Activated naive CD8-positive, alpha-beta T cell treated with anti-CD3 and anti-CD28 coated beads, Interleukin-2, amount 10 ng/mL, durations not matched to agents 7 days and 5 days (primary cell): ENCODE measurements at regions of chr22 and their contacts with region 1.

Region 1: DNA sequence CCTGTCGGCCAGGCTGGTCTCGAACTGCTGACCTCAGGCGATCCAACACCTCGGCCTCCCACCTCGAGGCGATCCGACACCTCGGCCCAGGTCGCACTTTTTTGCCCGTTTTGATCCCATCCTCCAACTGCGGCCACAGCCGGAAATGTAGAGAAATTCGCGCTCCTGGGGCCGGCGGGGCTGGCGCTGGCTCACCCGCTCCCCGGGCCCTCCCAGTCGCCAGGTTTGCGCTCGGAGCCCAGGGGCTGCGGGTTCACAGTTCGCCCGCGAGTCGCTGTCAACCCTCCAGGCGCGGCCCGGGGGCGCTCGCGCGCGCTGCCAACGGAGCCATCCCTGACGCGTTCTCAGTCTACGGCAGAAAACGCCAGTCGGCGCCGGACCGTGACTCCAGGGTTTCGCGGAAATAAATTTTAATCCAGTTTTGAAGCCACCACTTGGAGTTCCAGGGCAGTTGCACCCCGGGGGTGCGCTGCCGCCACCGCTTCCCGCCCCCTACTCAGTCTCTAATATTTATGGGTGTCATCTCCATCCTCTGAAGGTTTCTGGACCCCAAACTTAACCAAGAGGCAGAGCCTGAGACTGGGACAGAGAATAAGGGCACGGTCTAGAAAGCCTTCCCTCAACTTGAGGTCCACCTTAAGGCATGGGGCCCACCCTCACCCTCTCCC is 1.5 kb upstream of the KLHDC7B start:
- DNase-seq: peak; percentile 92
- ATAC-seq: peak; percentile 65
- H3K4me3 Mint-ChIP-seq: peak overlapping the region; percentile 77
- H3K27ac Mint-ChIP-seq: peak overlapping the region; percentile 98
- H3K4me1 Mint-ChIP-seq: peaks cover 51% of the 10 kb centered on the region
- H3K27me3 Mint-ChIP-seq: no peaks in the 10 kb centered on the region

Region 2: DNA sequence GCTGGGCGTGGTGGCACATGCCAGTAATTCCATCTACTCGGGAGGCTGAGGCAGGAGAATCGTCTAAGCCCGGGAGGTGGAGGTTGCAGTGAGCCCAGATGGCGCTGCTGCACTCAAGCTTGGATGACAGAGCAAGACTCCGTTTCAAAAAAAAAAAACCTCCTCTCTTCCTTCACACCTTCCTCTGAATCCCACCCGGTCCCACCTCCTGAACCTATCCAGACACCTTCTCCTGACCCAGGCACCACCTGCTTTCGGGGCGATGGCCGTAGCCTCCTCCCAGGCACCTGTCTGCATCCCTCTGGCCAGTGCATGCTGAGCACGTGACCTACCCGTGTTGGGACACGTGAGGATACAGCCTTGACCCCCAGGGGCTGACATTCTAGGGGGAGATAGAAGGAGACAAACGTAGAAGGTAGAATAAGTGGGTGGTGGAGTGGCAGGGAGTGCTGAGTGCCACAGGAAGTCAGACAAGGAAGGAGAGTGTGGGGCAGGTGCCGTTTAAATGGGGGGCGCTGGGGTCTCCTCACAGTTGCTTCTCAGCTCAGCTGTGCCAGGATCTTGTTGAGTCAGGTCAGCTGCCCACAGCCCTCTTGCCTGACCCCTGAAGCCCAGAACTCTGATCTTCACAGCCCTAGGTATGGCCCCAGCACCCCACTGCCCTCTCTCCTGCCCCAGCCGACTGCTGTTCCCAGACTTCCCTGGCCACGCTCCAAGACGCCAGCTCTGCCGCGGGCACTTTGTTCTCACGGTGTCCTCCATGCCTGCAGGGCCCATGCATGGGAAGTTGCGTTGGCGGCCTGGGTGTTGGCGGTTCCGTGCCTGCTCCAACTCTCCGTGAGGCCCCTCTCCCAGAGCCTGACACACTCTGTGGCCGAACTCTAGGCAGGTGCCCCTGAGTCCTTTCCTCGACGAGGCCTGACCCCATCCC is 58.7 kb before region 1 on chr22:
- POLR2A ChIA-PET with region 1: no interaction called
- DNase-seq: no peak
- ATAC-seq: no peak
- H3K4me3 Mint-ChIP-seq: no peak overlapping the region
- H3K27ac Mint-ChIP-seq: no peak overlapping the region
- H3K4me1 Mint-ChIP-seq: peaks cover 5% of the 10 kb centered on the region
- H3K27me3 Mint-ChIP-seq: peaks cover 4% of the 10 kb centered on the region

Region 3: GRCh38 chr22:50530877-50531545 is 13.2 kb before region 1 on chr22:
- POLR2A ChIA-PET with region 1: interaction called, 300 read pairs
- DNase-seq: peak; percentile 87
- ATAC-seq: peak; percentile 37
- H3K4me3 Mint-ChIP-seq: peak overlapping the region; percentile 95
- H3K27ac Mint-ChIP-seq: peak overlapping the region; percentile 100
- H3K4me1 Mint-ChIP-seq: peaks cover 41% of the 10 kb centered on the region
- H3K27me3 Mint-ChIP-seq: no peaks in the 10 kb centered on the region

Region 4: DNA sequence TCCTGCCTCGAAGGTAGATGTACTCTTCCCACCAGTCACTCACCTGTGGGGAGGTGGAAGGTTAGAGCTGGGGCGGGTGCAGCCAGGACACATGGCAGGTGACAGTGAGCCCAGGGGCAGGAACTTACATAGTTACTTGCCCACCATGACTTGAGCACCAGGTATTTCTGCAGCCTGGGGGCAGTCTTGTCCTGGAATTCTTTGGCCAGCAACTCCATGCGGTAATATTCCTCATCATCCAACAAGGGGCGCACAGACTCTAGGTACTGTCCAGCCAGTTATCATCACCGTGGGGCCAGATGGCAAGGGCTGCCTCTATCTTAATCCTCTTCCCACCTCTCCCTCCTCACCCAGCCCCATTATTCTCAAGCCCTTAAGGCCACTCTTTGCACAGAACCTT is 31.9 kb after region 1 on chr22:
- POLR2A ChIA-PET with region 1: interaction called, 15 read pairs
- DNase-seq: no peak
- ATAC-seq: no peak
- H3K4me3 Mint-ChIP-seq: no peak overlapping the region
- H3K27ac Mint-ChIP-seq: no peak overlapping the region
- H3K4me1 Mint-ChIP-seq: peaks cover 14% of the 10 kb centered on the region
- H3K27me3 Mint-ChIP-seq: no peaks in the 10 kb centered on the region

Region 5: DNA sequence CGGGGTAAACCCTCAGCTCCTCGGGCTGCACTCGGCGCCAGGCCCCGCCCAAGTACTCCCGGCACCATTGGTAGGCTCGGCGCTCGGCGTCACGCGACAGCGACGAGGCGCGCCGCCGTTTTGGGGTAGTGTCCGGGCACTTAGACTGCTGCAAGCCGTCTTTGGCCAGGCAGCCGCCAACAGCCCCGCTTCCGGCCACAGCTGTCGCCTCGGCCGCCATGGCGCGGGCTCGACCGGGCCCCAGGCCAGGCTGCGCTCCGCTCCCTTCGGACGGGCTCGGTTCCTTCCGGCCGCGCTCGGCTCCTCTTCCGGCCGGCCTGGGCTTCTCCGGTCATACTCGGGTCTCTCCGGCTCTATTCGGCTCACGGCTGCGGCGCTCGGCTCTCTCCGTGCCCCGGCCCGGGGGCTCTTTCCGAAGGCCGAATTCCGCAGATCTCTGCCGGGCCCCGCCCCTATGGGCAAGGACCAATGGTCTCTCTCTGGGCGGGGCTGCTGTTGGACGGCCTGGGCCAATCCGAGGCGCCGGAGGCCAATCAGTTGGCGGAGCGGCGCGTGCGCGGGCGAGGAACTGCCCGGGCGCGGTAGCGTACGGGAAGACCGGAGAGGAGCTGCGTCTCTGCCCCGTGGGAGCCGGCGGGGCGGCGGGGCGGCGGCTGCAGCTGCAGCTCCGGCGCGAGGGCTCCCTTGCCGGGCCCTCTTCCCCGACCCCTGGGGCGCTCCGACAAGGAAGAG is 38.5 kb after region 1 on chr22 and contains the start of gene CHKB:
- POLR2A ChIA-PET with region 1: interaction called, 15 read pairs
- DNase-seq: peak; percentile 98
- ATAC-seq: peak; percentile 94
- H3K4me3 Mint-ChIP-seq: peak within 1 kb of the TSS; percentile 99
- H3K27ac Mint-ChIP-seq: peak within 1 kb of the TSS; percentile 96
- H3K4me1 Mint-ChIP-seq: peaks cover 19% of the 10 kb centered on the region
- H3K27me3 Mint-ChIP-seq: no peaks in the 10 kb centered on the region
- total RNA-seq, gene CHKB: 132 to 137 TPM